K562 (cell line): ENCODE measurements at regions of chr22 and their contacts with region 1.

Region 1: DNA sequence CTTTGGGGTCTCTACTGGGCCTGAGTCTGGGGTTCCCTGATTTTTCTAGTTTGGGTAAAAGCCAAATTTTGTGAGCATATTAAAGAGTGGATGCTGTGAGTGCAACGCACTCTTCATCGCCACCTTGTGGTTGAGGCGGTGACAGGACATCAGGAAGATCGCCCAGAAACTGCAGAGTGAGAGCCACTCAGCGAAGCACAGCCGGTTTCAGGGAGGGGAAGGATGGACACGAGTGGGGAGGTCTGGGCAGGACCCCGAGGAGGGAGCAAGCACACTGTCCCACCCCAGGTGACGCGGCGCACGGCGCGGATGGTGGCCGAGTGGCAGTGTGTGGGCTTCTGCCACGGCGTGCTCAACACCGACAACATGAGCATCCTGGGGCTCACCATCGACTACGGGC is 9.1 kb downstream of the SELENOO start:
- DNase-seq: peak; percentile 38 to 72 (median 50)
- ATAC-seq: peak; percentile 89
- H3K4me3 ChIP-seq: no peak overlapping the region
- H3K27ac ChIP-seq: no peak overlapping the region
- H3K4me1 ChIP-seq: peaks cover 0 to 37% of the 10 kb centered on the region in 2 experiments; a peak in 2 of 5 replicates
- H3K27me3 ChIP-seq: no peaks in the 10 kb centered on the region
- CTCF ChIP-seq: peak; percentile 70 to 79 (median 74)
- EP300 ChIP-seq: no peak
- POLR2A ChIP-seq: no peak
- RAD21 ChIP-seq: peak; percentile 39 to 67

Region 2: DNA sequence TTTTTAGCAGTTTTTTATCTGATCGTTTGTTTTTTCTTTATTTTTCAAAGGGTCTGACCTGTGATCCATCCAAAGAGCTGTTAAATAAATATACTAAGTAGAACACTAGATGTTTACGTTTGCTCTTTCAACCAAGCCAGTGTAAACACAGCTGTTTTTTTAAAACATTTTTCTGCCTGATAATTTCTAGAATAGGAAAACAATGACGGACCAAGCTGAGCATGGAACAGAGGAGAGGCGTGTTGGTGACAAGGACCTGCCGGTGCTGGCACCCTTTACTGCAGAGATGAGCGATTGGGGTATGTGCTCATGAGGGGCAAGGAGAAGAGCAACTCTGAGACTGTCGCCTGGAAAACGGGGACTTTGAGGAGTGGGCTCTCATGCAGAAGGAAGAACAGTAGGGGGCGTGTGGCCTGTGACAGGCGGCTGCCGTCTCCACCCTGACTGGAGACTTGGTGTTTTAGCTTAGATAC is 68.0 kb before region 1 on chr22:
- CTCF ChIA-PET with region 1: interaction called, 10 read pairs
- POLR2A ChIA-PET with region 1: no interaction called
- in situ Hi-C with region 1: loop called (anchors 5 kb)
- intact Hi-C with region 1: no loop called
- DNase-seq: peak in 1 of 4 experiments; percentile 14
- ATAC-seq: no peak
- H3K4me3 ChIP-seq: no peak overlapping the region
- H3K27ac ChIP-seq: no peak overlapping the region
- H3K4me1 ChIP-seq: peaks cover 14 to 22% of the 10 kb centered on the region in 2 experiments; a peak in 4 of 5 replicates
- H3K27me3 ChIP-seq: no peaks in the 10 kb centered on the region
- CTCF ChIP-seq: peak in 2 of 3 experiments; percentile 18 to 26; a peak in 1 of 6 replicates
- EP300 ChIP-seq: no peak
- POLR2A ChIP-seq: no peak
- RAD21 ChIP-seq: no peak